Motor neuron (in vitro differentiated cells): ENCODE measurements at regions of chr1 and their contacts with region 1.

Region 1: GRCh38 chr1:165144757-165145397 is 211.6 kb downstream of the LMX1A start:
- ATAC-seq: peak; percentile 83 to 100 (median 90)
- H3K4me3 ChIP-seq: no peak overlapping the region
- H3K27ac ChIP-seq: no peak overlapping the region
- H3K4me1 ChIP-seq: no peaks in the 10 kb centered on the region

Region 2: DNA sequence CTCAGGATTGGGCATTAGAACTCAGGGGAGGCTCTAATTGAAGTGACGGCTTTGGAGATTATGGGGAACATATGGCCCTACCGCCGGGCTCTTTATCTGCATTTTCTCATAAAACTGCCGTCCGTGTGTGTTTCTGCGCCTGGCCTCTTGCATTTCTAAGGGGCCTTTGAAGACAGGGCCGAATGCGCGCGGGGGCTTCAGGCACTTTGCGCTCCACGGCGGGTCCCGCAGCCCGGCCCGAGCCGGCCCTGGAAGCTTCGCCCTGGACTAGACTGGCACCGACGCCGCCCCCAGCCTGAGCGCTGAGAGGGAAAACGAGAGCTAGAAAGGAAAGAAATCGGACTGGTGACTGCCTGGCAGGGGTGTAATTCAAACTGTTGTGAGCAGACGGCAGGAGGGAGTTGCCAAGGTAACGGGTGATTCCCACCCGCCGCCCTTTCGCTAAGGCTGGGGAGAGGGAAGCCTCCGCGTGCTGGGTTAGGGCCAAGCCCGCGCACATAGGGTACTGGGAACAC is 91.0 kb after region 1 on chr1:
- in situ Hi-C with region 1: loop called in 1 of 9 experiments (anchors 25 kb)
- ATAC-seq: peak; percentile 71 to 89 (median 82)
- H3K4me3 ChIP-seq: peak overlapping the region; percentile 34 to 47 (median 40)
- H3K27ac ChIP-seq: peak overlapping the region; percentile 29 to 73
- H3K4me1 ChIP-seq: peaks cover 11 to 12% of the 10 kb centered on the region in 2 donors

Region 3: GRCh38 chr1:166283190-166283589 is 1138.3 kb after region 1 on chr1:
- in situ Hi-C with region 1: no loop called
- ATAC-seq: peak in 2 of 8 experiments; percentile 48 to 91
- H3K4me3 ChIP-seq: no peak overlapping the region
- H3K27ac ChIP-seq: no peak overlapping the region
- H3K4me1 ChIP-seq: no peaks in the 10 kb centered on the region